ENCODE measurements at regions of chr19 and their contacts with region 1.

Region 1: GRCh38 chr19:44113138-44113783 is at the start of gene ZNF225:
- H3K4me3 Mint-ChIP-seq: peak within 1 kb of the TSS; percentile 95
- H3K27ac Mint-ChIP-seq: peak within 1 kb of the TSS; percentile 95
- H3K4me1 Mint-ChIP-seq: peaks cover 22% of the 10 kb centered on the region
- H3K27me3 Mint-ChIP-seq: peaks cover 3% of the 10 kb centered on the region

Region 2: DNA sequence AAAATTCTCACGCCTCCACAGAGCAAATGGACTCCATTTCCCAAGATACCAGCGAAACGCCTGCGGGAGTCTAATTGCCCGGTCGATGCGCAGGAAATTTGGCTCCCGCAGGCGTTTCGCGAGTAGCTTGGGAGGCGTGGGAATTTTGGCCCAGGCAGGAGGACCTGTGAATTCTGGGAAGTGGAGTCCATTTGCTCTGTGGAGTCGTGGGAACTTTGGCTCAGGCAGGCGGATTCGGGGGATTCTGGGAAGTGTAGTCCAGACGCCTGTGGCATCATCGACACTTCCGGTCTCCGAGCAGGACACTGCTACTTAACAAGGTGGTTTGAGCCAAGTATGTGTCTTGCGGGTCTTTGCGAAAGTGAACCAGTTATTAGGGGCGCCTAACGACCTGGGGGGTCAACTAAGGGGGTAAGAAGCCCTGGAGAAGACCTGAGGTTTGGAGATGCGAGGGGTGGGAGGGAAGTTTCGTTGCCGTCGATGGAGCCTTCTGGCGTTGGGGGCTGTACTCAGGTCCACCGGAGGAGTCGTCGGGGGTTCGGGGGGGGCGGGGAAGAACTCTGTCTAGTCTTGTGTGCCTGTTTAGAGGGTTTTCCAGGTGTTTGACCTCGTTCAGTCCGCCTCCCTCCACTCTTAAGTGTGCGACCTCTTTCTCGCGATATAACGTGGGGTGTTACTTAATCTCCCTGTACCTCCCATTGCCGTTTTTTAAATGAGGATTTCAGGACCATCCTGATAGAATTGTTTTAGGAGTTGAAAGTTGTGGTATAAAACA is 129.2 kb before region 1 on chr19 and contains the start of gene ZNF155:
- intact Hi-C with region 1: loop called (anchors 1 kb)
- H3K4me3 Mint-ChIP-seq: peak within 1 kb of the TSS; percentile 90
- H3K27ac Mint-ChIP-seq: peak within 1 kb of the TSS; percentile 88
- H3K4me1 Mint-ChIP-seq: peaks cover 5% of the 10 kb centered on the region
- H3K27me3 Mint-ChIP-seq: no peaks in the 10 kb centered on the region

Region 3: GRCh38 chr19:44071824-44072542 is 41.3 kb before region 1 on chr19 and contains the start of gene ZNF284:
- intact Hi-C with region 1: loop called (anchors 2 kb)
- H3K4me3 Mint-ChIP-seq: peak within 1 kb of the TSS; percentile 90
- H3K27ac Mint-ChIP-seq: peak within 1 kb of the TSS; percentile 84
- H3K4me1 Mint-ChIP-seq: peaks cover 21% of the 10 kb centered on the region
- H3K27me3 Mint-ChIP-seq: peaks cover 6% of the 10 kb centered on the region

Region 4: DNA sequence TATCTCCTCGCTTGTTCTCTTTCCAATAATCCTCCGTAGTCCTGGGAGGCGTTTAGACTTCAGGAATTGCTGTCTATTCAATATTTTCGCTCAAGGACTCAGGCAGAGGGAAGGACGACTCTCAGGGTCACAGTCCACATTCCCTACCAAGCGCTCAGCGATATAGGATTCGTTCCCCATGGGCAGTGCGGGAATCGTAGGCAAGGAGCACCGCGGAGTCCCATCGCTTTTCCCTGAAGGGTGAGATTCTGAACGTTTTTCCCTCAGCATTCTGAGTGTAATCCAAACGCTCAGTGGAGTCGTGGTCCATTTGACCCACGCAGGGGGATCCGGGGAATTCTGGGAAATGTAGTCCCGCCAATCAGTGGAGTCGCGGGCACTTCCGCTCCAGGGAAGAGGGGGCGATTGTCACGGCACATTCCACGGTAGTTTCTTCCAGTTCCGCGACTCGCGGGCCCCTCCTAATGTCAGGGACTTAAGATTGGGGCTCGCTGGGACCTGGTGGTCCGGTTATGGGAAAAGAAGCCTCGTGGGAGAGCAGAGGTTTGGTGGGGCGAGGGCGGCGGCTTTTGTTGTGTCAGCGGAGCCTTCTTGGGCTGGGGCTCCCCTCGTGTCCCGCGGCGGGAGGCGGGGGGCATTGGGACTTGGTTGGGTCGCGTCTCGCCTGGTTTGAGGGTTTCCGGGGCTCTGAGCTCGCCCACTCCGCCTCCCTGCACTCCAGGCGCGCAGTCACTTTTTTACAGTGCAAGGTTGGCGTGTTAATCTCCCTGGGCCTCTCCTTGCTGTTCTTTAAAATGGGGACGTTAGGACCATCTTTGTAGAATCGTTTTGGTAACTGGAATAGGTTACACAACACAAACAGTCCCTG is 28.2 kb after region 1 on chr19 and contains the start of gene ZNF234:
- intact Hi-C with region 1: loop called (anchors 1 kb)
- H3K4me3 Mint-ChIP-seq: peak within 1 kb of the TSS; percentile 98
- H3K27ac Mint-ChIP-seq: peak within 1 kb of the TSS; percentile 98
- H3K4me1 Mint-ChIP-seq: peaks cover 17% of the 10 kb centered on the region
- H3K27me3 Mint-ChIP-seq: peaks cover 3% of the 10 kb centered on the region

Region 5: GRCh38 chr19:44207126-44207803 is 94.0 kb after region 1 on chr19:
- intact Hi-C with region 1: loop called (anchors 1 kb)
- H3K4me3 Mint-ChIP-seq: peak overlapping the region; percentile 96
- H3K27ac Mint-ChIP-seq: peak overlapping the region; percentile 98
- H3K4me1 Mint-ChIP-seq: peaks cover 12% of the 10 kb centered on the region
- H3K27me3 Mint-ChIP-seq: peaks cover 11% of the 10 kb centered on the region

Measured in dendritic cell treated with granulocyte-macrophage colony-stimulating factor and Interleukin-4, amounts not matched to agents 40 ng/mL and 50 ng/mL, for 4 days (primary cell).